ENCODE measurements at regions of chr12 and their contacts with region 1.

Region 1: GRCh38 chr12:112012775-112013600 is at the starts of genes ERP29 and TMEM116:
- DNase-seq: peak; percentile 100
- H3K4me3 Mint-ChIP-seq: peak within 1 kb of the TSS; percentile 98
- H3K27ac Mint-ChIP-seq: peak within 1 kb of the TSS; percentile 96
- H3K4me1 Mint-ChIP-seq: peaks cover 48% of the 10 kb centered on the region
- H3K27me3 Mint-ChIP-seq: no peaks in the 10 kb centered on the region
- total RNA-seq, gene ERP29: 101 to 107 TPM
- total RNA-seq, gene TMEM116: 12.7 to 13.4 TPM

Region 2: DNA sequence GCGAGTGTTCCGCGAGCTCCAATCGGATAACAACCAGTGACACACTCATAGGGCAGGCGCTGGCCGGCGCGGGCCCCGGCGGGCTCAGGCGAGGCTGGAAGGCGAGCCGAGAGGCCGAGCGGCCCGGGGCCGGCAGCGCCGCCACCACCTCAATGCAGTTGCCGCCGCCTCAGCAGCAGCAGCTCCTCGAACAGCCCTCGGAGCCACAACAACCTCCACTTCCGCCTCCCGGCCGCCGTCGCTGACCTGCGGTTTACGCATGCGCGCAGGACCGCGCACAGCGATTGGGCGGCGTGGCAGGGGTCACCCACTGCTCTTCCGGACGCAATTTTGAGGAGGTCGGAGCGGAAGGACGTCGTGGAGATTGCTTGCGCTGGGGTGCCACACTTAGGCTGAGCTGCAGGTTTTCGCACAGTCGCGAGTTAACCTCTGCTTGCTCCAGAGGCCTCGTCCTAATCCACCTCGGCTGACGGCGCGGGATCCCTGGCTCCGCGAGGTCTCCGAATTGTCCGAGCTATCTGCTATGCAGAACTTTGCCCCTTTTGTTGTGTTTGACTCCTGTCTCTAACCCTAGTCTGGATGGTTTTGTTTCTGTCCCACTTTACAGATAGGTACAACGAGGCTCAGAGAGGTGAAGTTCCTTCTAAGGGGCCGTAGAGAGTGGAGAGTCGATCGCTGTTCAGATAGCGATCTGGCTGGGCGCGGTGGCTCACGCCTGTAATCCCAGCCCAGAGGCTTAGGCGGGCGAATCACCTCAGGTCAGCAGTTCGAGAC is 327.1 kb before region 1 on chr12 and contains the starts of genes ACAD10 and BRAP:
- CTCF ChIA-PET with region 1: no interaction called
- intact Hi-C with region 1: loop called (anchors 10 kb)
- DNase-seq: peak; percentile 94
- H3K4me3 Mint-ChIP-seq: peak within 1 kb of the TSS; percentile 91
- H3K27ac Mint-ChIP-seq: peak within 1 kb of the TSS; percentile 86
- H3K4me1 Mint-ChIP-seq: peaks cover 33% of the 10 kb centered on the region
- H3K27me3 Mint-ChIP-seq: no peaks in the 10 kb centered on the region
- total RNA-seq, gene ACAD10: 19.0 to 21.7 TPM
- total RNA-seq, gene BRAP: 14.7 to 16.9 TPM

Region 3: GRCh38 chr12:111993292-111994150 is 19.5 kb before region 1 on chr12:
- CTCF ChIA-PET with region 1: interaction called, 4 read pairs
- intact Hi-C with region 1: loop called (anchors 1 kb)
- DNase-seq: peak; percentile 42
- H3K4me3 Mint-ChIP-seq: peak overlapping the region; percentile 72
- H3K27ac Mint-ChIP-seq: peak overlapping the region; percentile 31
- H3K4me1 Mint-ChIP-seq: peaks cover 60% of the 10 kb centered on the region
- H3K27me3 Mint-ChIP-seq: no peaks in the 10 kb centered on the region

Region 4: DNA sequence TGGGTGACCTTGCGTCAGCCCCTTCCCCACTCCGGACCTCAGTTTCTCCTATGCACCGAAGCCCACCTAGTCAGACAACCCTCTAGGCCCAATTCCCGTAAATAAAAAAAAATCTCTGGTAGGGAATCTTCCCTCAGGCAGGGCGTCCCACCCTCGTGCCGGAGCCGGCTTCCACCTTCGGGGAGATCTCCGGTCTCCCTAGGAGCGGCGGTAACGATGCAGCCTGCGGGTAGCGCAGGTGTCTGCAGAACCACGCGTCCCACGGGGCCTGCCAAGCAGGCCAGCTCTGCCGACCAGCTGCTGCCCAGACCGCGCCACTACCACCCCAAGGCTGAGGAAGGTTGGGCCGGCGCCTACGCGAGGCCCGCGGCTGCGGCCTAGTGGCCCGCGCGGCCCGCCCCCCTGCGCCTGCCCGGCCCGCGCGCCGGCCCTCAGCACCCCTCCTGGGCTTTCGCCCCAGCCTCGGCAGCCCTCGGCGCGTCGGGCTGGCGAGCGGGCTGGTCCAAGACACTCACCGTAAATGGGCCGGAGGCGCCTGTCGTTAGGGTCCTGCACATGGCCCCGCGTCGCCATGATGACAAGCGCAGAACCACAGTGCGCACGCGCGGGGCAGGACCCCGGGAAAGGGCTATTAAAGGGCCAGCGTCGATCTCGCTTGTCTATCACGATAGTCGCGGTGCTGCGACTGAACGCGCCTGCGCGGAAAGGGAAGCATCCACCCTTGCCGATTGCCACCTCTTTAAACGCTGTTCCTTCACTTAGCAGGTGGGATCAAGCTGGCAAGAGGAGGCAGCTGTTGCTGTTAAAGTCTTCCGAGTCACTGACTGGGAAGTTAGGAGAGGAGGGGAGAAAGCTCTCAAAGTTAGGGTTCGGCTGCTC is 95.5 kb after region 1 on chr12 and contains the start of gene NAA25:
- CTCF ChIA-PET with region 1: no interaction called
- intact Hi-C with region 1: loop called (anchors 1 kb)
- DNase-seq: peak; percentile 87
- H3K4me3 Mint-ChIP-seq: peak within 1 kb of the TSS; percentile 96
- H3K27ac Mint-ChIP-seq: peak within 1 kb of the TSS; percentile 99
- H3K4me1 Mint-ChIP-seq: peaks cover 64% of the 10 kb centered on the region
- H3K27me3 Mint-ChIP-seq: no peaks in the 10 kb centered on the region
- total RNA-seq, gene NAA25: 52.4 to 55.7 TPM

Region 5: DNA sequence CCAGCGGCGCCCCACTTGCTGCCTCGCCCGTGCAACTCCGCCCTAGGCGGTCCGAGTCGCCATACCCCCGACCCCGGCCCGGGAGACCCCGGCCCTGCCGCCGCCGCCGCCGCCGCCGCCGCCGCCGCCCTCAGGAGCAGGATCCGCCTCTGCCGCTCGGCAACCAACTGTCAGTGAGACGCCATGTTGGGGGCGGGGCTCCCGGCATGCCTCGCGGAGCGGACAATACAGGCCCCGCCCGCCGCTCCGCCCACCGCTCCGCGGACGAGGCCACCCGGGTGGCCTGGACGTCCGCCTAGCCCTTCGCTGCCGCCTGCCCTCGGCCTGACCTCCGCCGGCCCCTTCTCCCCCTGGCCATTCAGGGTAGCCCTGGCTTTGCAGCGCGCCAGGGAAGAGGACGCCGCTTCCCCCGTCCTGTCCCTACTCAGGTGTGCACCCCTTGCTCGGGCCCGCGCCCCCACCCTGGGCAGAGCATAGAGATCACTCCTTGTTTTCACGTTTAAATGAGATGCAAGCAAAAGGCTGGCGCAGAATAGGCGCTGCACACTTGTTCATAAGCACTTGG is 369.3 kb after region 1 on chr12 and contains the start of gene HECTD4:
- CTCF ChIA-PET with region 1: interaction called, 9 read pairs
- intact Hi-C with region 1: loop called (anchors 1 kb)
- DNase-seq: peak; percentile 95
- H3K4me3 Mint-ChIP-seq: peak within 1 kb of the TSS; percentile 96
- H3K27ac Mint-ChIP-seq: peak within 1 kb of the TSS; percentile 80
- H3K4me1 Mint-ChIP-seq: peaks cover 27% of the 10 kb centered on the region
- H3K27me3 Mint-ChIP-seq: no peaks in the 10 kb centered on the region
- total RNA-seq, gene HECTD4: 17.6 to 19.2 TPM

Measured in activated naive CD4-positive, alpha-beta T cell treated with anti-CD3 and anti-CD28 coated beads for 36 hours (primary cell).